Thyroid gland (tissue), 4 donors: ENCODE measurements at regions of chr11 and their contacts with region 1.

Region 1: GRCh38 chr11:84899740-84900139 is 727.4 kb downstream of the DLG2 start:
- DNase-seq: no peak
- H3K4me3 ChIP-seq: no peak overlapping the region
- H3K27ac ChIP-seq: no peak overlapping the region
- H3K4me1 ChIP-seq: no peaks in the 10 kb centered on the region
- H3K27me3 ChIP-seq: no peaks in the 10 kb centered on the region
- CTCF ChIP-seq: no peak
- POLR2A ChIP-seq: no peak

Region 2: GRCh38 chr11:84833488-84834088 is 66.2 kb before region 1 on chr11:
- intact Hi-C with region 1: loop called (anchors 10 kb)
- DNase-seq: no peak
- H3K4me3 ChIP-seq: no peak overlapping the region
- H3K27ac ChIP-seq: no peak overlapping the region
- H3K4me1 ChIP-seq: peaks cover 0 to 14% of the 10 kb centered on the region in 2 donors
- H3K27me3 ChIP-seq: no peaks in the 10 kb centered on the region
- CTCF ChIP-seq: no peak
- POLR2A ChIP-seq: no peak